ENCODE measurements at regions of chr2 and their contacts with region 1.

Region 1: DNA sequence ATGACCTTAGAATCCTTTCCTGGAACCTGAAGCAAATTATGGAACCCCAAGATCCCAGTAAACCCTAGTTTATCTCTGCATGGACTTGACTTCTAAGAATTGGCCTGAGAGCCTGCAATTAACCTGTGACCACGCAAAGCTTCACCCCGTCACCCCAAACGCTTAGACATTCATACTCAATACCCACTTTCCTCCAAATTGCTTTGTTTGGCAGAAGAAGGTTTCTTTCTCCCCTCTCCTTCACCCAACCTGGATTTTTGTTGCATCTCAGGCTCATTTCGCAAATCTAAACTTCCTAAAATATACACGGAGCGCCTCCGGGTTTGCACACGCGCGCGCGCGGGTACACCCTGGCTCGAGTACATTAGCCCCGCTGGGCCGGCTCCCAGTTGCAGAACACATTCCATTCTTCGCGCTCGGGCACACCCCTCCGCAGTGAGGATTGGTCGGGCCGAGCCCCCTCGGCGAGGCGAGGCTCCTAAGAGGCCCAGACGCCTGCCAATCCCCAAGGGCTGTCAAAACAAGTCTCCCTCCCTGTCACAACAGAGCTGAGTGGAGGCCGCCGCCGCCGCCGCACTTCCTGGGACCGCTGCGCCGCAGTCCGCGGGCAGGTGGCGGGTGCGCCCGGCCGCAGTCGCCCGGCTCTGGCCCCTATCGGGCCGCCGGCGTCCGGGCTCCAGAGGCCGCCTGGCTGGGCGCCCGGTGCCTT is at the start of gene PLCL1:
- DNase-seq: peak; percentile 96
- H3K4me3 Mint-ChIP-seq: peak within 1 kb of the TSS; percentile 94
- H3K27ac Mint-ChIP-seq: peak within 1 kb of the TSS; percentile 75
- H3K4me1 Mint-ChIP-seq: peaks cover 43% of the 10 kb centered on the region
- H3K27me3 Mint-ChIP-seq: no peaks in the 10 kb centered on the region
- total RNA-seq, gene PLCL1: 3.3 to 3.5 TPM

Region 2: DNA sequence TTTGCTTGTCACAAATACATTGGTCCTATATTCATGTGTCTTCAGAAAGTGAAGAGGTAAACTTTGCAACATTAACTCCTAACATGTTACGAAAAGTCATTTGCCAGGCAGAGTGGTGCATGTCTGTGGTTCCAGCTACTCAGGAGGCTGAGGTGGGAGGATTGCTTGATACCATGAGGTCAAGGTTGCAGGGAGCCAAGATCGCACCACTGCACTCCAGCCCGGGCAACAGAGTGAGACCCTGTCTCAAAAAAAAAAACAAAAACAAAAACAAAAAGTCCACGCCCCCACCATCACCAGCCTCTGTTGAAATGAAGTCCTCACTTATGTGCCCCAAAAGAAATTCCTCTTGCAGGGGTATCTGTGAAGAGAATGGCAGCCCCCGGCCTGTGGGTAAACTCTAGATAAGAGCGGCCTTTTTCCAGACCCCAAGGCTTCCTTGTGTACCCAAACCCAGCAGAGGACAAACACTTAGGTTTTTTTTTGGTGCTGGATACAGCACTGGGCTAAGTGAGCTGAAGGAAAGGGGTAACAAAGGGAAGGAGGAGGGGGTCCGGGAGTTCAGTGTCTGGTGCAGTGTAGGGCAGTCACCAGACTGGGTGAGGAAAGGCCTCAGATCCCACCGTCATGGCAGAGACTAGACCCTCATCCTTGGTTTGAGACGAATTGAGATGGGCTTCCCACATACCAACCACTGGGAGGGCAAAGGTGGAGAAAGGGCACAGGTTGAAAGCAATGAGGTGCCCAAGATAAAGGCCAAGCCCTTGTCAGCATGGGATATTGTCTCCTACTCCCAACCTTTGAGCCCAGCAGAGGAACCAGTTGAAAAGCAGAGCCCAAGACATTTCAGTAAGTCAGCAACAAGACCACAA is 323.8 kb before region 1 on chr2:
- CTCF ChIA-PET with region 1: no interaction called
- intact Hi-C with region 1: no loop called
- DNase-seq: no peak
- H3K4me3 Mint-ChIP-seq: no peak overlapping the region
- H3K27ac Mint-ChIP-seq: no peak overlapping the region
- H3K4me1 Mint-ChIP-seq: peaks cover under 1% of the 10 kb centered on the region
- H3K27me3 Mint-ChIP-seq: no peaks in the 10 kb centered on the region

Region 3: DNA sequence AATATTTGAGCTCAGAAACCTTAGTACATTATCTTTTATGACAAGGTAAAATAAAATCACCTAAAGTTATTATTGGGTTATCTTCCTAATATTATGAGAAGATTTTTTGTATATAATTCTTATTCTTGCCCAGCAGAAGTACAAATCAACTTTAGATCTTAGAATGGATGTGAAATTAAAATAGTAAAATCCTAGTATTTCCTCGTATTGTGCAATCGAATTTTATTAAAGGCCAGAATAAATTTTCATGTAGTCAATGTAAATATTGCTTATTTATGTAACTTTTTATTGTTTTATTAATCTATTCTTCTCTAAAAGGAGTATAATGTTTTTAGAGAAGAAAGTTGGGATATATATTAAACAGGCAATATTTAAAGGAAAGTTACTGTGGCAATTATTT is 86.3 kb before region 1 on chr2:
- CTCF ChIA-PET with region 1: no interaction called
- intact Hi-C with region 1: no loop called
- DNase-seq: no peak
- H3K4me3 Mint-ChIP-seq: no peak overlapping the region
- H3K27ac Mint-ChIP-seq: no peak overlapping the region
- H3K4me1 Mint-ChIP-seq: peaks cover 7% of the 10 kb centered on the region
- H3K27me3 Mint-ChIP-seq: no peaks in the 10 kb centered on the region

Region 4: DNA sequence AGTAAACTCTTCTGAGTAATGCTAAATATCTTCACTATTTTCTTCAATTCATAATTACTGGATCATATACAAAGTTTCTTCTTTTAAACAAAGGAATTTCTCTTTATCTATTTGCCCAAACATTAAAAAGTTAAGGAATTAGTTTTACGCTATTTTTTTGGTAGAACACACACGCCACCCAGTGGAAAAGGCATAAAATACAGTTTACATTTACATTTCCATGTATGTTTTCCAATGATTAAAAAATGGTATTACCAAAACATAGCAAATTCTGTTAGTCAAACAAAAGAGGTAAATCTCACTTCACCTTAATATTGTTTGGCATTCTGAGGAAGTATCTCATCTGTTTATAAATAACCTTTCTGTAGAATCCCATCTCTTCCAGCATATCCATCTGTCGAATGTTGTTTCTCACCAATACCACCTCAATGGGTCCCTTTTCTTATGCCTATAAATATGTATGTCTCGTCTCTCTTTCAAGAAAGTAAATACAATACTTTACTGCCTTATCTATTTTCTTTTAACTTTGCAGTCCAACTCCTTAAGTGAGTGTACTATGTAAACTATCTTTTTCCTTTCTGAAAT is 26.3 kb before region 1 on chr2:
- CTCF ChIA-PET with region 1: no interaction called
- intact Hi-C with region 1: no loop called
- DNase-seq: peak; percentile 52
- H3K4me3 Mint-ChIP-seq: no peak overlapping the region
- H3K27ac Mint-ChIP-seq: no peak overlapping the region
- H3K4me1 Mint-ChIP-seq: no peaks in the 10 kb centered on the region
- H3K27me3 Mint-ChIP-seq: peaks cover 5% of the 10 kb centered on the region

Region 5: DNA sequence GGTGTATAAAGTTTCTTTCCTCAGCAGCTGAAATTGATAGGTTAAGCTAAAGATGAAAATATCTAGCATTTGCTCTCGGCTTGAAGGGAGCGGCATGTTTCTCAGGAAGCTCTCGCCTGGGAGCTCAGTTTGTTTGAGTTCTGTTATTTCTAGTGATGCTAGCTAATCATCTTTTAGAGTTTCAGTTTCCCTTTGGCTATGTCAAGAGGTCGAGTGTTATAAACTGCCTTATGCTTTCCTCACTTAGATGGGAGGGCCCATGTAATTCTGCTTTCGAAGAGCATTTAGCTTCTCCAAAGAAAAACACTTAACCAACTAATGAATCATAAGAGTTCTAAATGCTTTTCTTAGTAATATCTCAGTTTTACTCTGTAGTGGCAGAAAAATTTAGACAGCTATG is 33.8 kb after region 1 on chr2:
- CTCF ChIA-PET with region 1: interaction called, 10 read pairs
- intact Hi-C with region 1: loop called (anchors 1 kb)
- DNase-seq: peak; percentile 48
- H3K4me3 Mint-ChIP-seq: peak overlapping the region; percentile 56
- H3K27ac Mint-ChIP-seq: peak overlapping the region; percentile 63
- H3K4me1 Mint-ChIP-seq: peaks cover 59% of the 10 kb centered on the region
- H3K27me3 Mint-ChIP-seq: no peaks in the 10 kb centered on the region

Region 6: DNA sequence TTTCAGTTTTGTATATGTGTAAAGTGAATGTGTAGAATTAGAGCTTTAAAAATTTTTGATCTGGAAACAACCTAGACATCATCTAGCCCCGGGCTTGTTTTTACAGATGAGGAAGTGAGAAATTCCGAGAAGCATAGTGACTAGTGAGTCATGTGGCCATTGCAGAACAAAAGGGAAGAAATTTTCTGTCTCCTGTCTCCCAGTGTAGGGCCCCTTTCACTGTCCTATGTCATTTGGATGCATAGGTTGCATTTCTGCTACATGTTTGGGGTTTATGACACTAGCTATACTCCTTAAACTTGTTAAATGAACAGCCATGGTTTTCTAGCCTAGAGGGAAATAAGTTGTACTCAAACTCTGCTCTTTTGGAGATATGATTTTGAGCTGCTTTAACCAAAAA is 84.8 kb after region 1 on chr2:
- CTCF ChIA-PET with region 1: no interaction called
- intact Hi-C with region 1: loop called (anchors 1 kb)
- DNase-seq: peak; percentile 76
- H3K4me3 Mint-ChIP-seq: peak overlapping the region; percentile 21
- H3K27ac Mint-ChIP-seq: peak overlapping the region; percentile 94
- H3K4me1 Mint-ChIP-seq: peaks cover 74% of the 10 kb centered on the region
- H3K27me3 Mint-ChIP-seq: no peaks in the 10 kb centered on the region

Region 7: DNA sequence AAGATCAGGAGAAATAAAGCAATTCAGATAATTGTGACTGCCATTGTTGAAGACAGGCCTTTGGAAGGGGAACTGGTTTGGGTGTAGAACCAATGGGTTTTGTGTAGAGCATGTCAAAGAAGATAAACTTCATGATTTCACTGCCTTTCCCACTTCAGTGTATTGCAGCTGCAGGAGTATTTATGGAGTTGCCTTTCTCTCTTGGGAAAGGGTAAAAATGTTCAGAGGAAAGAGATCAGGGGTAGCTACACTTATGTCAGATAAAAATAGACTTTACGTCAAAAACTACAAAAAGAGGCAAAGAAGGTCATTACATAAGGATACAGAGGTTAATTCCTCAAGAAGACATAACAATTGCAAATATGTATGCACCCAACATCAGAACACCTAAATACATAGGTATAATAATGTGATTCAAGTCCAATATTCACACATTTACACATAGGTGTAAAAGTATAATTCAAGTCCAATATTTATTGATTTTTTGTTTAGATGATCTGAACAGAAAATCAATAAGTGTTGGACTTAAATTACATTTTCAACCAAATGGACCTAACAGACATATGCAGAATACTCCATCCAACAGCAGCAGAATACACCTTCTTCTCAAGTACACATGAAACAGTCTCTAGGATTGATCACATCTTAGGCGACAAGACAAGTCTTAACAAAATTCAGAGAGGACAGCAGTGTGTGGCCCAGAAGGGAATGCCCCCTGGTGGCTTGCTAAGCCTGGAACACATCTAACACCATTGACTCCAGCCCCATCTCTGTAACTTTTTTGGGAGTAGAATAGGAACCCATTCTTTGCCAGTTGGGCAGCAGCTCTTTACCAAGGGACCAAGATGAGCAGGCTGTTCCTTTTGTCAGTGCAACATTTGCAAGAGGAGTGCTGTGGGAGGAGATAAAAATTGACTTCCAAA is 249.8 kb after region 1 on chr2:
- CTCF ChIA-PET with region 1: no interaction called
- intact Hi-C with region 1: loop called (anchors 1 kb)
- DNase-seq: peak; percentile 71
- H3K4me3 Mint-ChIP-seq: no peak overlapping the region
- H3K27ac Mint-ChIP-seq: no peak overlapping the region
- H3K4me1 Mint-ChIP-seq: peaks cover 27% of the 10 kb centered on the region
- H3K27me3 Mint-ChIP-seq: no peaks in the 10 kb centered on the region

Region 8: DNA sequence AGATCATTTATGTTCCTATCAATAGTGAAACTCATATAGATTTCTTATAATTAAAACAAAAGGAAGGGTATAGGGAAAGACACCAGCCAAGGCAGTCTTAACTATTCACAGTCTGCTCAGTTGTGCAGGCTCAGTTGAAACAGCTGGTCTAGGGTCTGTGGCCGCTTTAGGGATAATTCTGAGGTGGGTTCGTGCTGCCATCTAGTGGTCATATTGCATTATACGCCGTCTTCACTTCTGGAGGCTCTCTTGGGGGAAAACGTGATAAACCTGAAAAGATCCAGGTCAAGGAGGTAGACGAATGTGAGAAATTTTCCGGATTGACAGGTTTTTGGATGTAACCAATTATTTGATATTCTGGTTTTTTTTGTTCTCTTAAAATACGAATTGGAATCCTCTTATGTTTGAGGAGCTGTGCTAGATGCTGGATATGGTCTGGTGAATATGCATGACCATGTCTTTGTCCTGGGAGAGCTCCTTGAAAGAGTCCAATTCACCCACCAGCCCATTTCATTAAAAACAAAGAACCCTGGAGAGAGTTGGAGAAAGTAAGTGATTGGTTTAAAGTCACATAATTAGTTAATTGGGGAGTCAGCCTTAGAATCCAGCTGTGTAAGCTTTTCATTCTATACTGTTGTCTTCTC is 492.6 kb after region 1 on chr2:
- CTCF ChIA-PET with region 1: interaction called, 18 read pairs
- intact Hi-C with region 1: loop called (anchors 1 kb)
- DNase-seq: peak; percentile 73
- H3K4me3 Mint-ChIP-seq: no peak overlapping the region
- H3K27ac Mint-ChIP-seq: no peak overlapping the region
- H3K4me1 Mint-ChIP-seq: no peaks in the 10 kb centered on the region
- H3K27me3 Mint-ChIP-seq: peaks cover 7% of the 10 kb centered on the region